PC-9 (cell line): ENCODE measurements at regions of chr12 and their contacts with region 1.

Region 1: GRCh38 chr12:69070319-69071090 is 137.5 kb upstream of the CPM start:
- DNase-seq: peak in 1 of 2 experiments; percentile 45
- H3K4me3 ChIP-seq: no peak overlapping the region
- H3K27ac ChIP-seq: no peak overlapping the region
- H3K4me1 ChIP-seq: 0 out of 2 replicates have a peak, but pooled peaks cover 11% of the 10 kb centered on the region
- H3K27me3 ChIP-seq: no peaks in the 10 kb centered on the region
- CTCF ChIP-seq: peak; percentile 93

Region 2: GRCh38 chr12:68865399-68866164 is 204.9 kb before region 1 on chr12:
- CTCF ChIA-PET with region 1: no interaction called
- POLR2A ChIA-PET with region 1: no interaction called
- intact Hi-C with region 1: loop called (anchors 1 kb)
- DNase-seq: no peak
- H3K4me3 ChIP-seq: no peak overlapping the region
- H3K27ac ChIP-seq: no peak overlapping the region
- H3K4me1 ChIP-seq: no peaks in the 10 kb centered on the region
- H3K27me3 ChIP-seq: no peaks in the 10 kb centered on the region
- CTCF ChIP-seq: no peak

Region 3: GRCh38 chr12:68871921-68872320 is 198.6 kb before region 1 on chr12:
- CTCF ChIA-PET with region 1: no interaction called
- POLR2A ChIA-PET with region 1: no interaction called
- intact Hi-C with region 1: loop called (anchors 1 kb)
- DNase-seq: peak in 1 of 2 experiments; percentile 8
- H3K4me3 ChIP-seq: no peak overlapping the region
- H3K27ac ChIP-seq: no peak overlapping the region
- H3K4me1 ChIP-seq: no peaks in the 10 kb centered on the region
- H3K27me3 ChIP-seq: no peaks in the 10 kb centered on the region
- CTCF ChIP-seq: peak; percentile 42; the same call in 1 of the 2 replicates

Region 4: GRCh38 chr12:69091442-69092017 is 21.0 kb after region 1 on chr12:
- CTCF ChIA-PET with region 1: no interaction called
- POLR2A ChIA-PET with region 1: no interaction called
- intact Hi-C with region 1: no loop called
- DNase-seq: no peak
- H3K4me3 ChIP-seq: no peak overlapping the region
- H3K27ac ChIP-seq: no peak overlapping the region
- H3K4me1 ChIP-seq: no peaks in the 10 kb centered on the region
- H3K27me3 ChIP-seq: peaks cover 20% of the 10 kb centered on the region; the same call in 1 of the 2 replicates
- CTCF ChIP-seq: no peak

Region 5: GRCh38 chr12:69136931-69137613 is 66.6 kb after region 1 on chr12:
- CTCF ChIA-PET with region 1: no interaction called
- POLR2A ChIA-PET with region 1: no interaction called
- intact Hi-C with region 1: no loop called
- DNase-seq: no peak
- H3K4me3 ChIP-seq: no peak overlapping the region
- H3K27ac ChIP-seq: no peak overlapping the region
- H3K4me1 ChIP-seq: no peaks in the 10 kb centered on the region
- H3K27me3 ChIP-seq: 0 out of 2 replicates have a peak, but pooled peaks cover 6% of the 10 kb centered on the region
- CTCF ChIP-seq: no peak